ENCODE measurements at regions of chr7 and their contacts with region 1.

Region 1: DNA sequence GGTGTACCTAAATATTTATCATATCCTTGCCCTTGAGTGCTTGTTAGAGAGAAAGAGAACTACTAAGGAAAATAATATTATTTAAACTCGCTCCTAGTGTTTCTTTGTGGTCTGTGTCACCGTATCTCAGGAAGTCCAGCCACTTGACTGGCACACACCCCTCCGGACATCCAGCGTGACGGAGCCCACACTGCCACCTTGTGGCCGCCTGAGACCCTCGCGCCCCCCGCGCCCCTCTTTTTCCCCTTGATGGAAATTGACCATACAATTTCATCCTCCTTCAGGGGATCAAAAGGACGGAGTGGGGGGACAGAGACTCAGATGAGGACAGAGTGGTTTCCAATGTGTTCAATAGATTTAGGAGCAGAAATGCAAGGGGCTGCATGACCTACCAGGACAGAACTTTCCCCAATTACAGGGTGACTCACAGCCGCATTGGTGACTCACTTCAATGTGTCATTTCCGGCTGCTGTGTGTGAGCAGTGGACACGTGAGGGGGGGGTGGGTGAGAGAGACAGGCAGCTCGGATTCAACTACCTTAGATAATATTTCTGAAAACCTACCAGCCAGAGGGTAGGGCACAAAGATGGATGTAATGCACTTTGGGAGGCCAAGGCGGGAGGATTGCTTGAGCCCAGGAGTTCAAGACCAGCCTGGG is 11.4 kb downstream of the SERPINE1 start:
- DNase-seq: peak; percentile 90
- ATAC-seq: peak; percentile 96

Region 2: DNA sequence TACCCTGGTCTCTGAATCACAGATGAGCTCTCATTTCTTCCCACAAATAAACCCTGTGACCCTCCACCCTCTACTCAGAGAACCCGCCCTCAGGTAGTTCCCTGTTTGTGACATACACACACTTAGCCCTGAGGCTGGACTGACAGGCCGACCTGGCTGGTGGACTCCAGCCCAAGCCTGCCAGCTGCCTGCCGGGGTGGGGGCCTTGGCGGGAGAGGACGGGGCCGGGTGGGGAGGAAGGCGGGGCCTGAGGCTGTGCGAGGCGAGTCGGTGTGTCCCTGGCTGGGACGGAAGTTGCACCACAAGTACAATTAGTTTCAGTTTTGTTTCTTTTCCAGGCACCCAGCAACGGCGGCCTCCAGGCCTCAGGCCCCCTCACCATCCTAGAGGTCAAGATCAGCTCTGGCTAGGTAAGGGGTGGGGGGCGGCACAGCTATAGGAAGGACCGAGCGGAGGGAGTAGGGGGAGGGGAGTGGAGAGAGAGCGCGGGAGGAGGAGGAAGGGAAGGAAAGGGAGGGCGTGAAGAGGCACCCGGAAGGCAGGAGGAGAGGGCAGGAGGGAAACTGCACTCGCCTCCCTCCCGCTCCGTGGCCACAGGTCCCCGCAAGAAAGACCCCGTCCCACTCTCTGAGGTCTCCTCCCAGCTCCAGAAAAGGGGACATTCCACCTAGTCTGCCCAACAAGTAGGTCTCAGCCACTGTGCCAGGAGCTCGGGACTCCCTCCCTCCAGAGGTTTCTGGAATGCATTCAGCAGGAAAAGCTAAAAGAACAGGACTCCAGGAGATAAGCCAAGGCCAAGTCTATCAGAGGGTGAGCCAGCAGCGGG is 53.0 kb before region 1 on chr7 and contains the start of gene TRIM56:
- intact Hi-C with region 1: no loop called
- DNase-seq: peak; percentile 92
- ATAC-seq: peak; percentile 96 to 97
- total RNA-seq, gene TRIM56: 20.7 to 22.4 TPM

Region 3: GRCh38 chr7:101099969-101100781 is 38.2 kb before region 1 on chr7:
- intact Hi-C with region 1: loop called (anchors 5 kb)
- DNase-seq: peak; percentile 95
- ATAC-seq: peak; percentile 97 to 98

Region 4: DNA sequence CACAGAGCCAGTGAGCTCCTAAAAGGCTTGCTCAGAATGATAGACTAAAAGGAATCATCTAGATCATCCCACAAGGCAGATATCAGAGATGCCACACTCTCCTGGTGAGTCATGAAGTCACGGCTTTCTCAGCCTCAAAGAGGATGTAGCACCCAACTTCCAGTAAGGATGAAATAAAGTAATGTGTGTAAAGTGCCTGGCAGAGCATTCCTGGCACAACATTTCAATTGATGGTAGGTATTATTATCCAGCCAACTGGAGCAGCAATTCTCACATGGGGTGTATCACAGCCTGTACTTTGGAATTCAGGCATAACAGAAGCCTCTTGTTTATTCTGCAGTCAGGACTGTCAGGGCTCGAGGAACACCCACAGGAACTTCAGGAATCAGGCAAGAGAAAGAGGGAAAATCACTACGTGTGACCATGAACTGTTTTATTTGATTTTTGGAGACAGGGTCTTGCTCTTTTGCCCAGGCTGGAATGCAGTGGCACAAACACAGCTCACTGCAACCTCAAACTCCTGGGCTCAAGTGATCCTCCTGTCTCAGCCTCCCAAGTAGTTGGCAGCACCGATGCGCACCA is 47.0 kb after region 1 on chr7:
- intact Hi-C with region 1: loop called in 1 of 2 experiments (anchors 5 kb)
- DNase-seq: no peak
- ATAC-seq: no peak